PC-9 (cell line): ENCODE measurements at regions of chr7 and their contacts with region 1.

Region 1: GRCh38 chr7:119935418-119936025 is 337.5 kb upstream of the KCND2 start:
- DNase-seq: no peak
- H3K4me3 ChIP-seq: no peak overlapping the region
- H3K27ac ChIP-seq: no peak overlapping the region
- H3K4me1 ChIP-seq: no peaks in the 10 kb centered on the region
- H3K27me3 ChIP-seq: no peaks in the 10 kb centered on the region
- CTCF ChIP-seq: peak; percentile 70

Region 2: GRCh38 chr7:119270045-119270464 is 665.5 kb before region 1 on chr7:
- CTCF ChIA-PET with region 1: no interaction called
- POLR2A ChIA-PET with region 1: no interaction called
- intact Hi-C with region 1: no loop called
- DNase-seq: peak; percentile 49 to 58
- H3K4me3 ChIP-seq: no peak overlapping the region
- H3K27ac ChIP-seq: no peak overlapping the region
- H3K4me1 ChIP-seq: no peaks in the 10 kb centered on the region
- H3K27me3 ChIP-seq: no peaks in the 10 kb centered on the region
- CTCF ChIP-seq: peak; percentile 91

Region 3: GRCh38 chr7:119556436-119556835 is 379.1 kb before region 1 on chr7:
- CTCF ChIA-PET with region 1: no interaction called
- POLR2A ChIA-PET with region 1: no interaction called
- intact Hi-C with region 1: no loop called
- DNase-seq: no peak
- H3K4me3 ChIP-seq: no peak overlapping the region
- H3K27ac ChIP-seq: no peak overlapping the region
- H3K4me1 ChIP-seq: no peaks in the 10 kb centered on the region
- H3K27me3 ChIP-seq: no peaks in the 10 kb centered on the region
- CTCF ChIP-seq: no peak

Region 4: DNA sequence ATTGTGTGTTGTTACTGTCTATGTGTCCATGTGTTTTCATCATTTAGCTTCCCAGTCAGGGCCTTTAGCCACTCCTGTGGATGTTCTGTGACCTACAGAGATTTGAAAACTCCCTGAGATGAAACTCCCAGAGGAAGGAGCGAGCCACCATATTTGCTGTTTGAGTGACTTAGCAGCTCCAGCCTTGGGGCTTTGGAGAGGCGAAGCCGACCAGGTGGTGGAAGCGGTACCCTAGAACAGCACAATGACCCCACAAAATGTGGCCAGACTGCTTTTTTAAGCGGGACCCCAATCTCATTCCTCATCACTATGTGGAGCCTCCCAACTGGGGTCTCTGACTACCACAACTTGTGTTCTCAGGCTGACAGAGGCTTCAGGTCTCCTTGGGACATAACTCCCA is 13.5 kb after region 1 on chr7:
- CTCF ChIA-PET with region 1: no interaction called
- POLR2A ChIA-PET with region 1: no interaction called
- intact Hi-C with region 1: no loop called
- DNase-seq: no peak
- H3K4me3 ChIP-seq: no peak overlapping the region
- H3K27ac ChIP-seq: no peak overlapping the region
- H3K4me1 ChIP-seq: no peaks in the 10 kb centered on the region
- H3K27me3 ChIP-seq: no peaks in the 10 kb centered on the region
- CTCF ChIP-seq: no peak

Region 5: DNA sequence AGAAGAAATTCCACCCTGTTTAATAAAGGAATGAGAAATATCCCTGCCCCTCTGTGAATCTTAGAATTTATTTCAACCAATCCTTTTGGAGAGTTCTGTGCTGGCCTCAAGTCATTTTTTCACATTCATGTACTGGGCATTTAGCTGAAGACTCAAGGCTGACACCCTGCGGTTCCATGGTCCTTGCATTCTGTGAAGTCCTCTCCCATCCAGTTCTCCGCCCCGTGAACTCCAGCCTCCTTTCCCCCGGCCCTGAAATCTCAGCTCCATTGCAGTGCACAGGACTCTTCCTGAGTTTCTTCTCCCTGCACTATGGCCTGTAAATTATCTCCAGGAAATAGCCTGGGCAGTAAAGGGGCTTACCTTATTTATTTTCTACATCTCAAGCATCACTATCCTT is 154.4 kb after region 1 on chr7:
- CTCF ChIA-PET with region 1: no interaction called
- POLR2A ChIA-PET with region 1: no interaction called
- intact Hi-C with region 1: loop called (anchors 10 kb)
- DNase-seq: no peak
- H3K4me3 ChIP-seq: no peak overlapping the region
- H3K27ac ChIP-seq: no peak overlapping the region
- H3K4me1 ChIP-seq: no peaks in the 10 kb centered on the region
- H3K27me3 ChIP-seq: no peaks in the 10 kb centered on the region
- CTCF ChIP-seq: no peak